ENCODE measurements at regions of chr6 and their contacts with region 1.

Region 1: GRCh38 chr6:32971581-32972352 is 3.4 kb downstream of the BRD2 start:
- DNase-seq: peak; percentile 99
- H3K4me3 ChIP-seq: peak overlapping the region; percentile 92
- H3K4me3 Mint-ChIP-seq: peak overlapping the region; percentile 85
- H3K27ac Mint-ChIP-seq: peak overlapping the region; percentile 100
- H3K4me1 ChIP-seq: peaks cover 27% of the 10 kb centered on the region
- H3K4me1 Mint-ChIP-seq: peaks cover 24% of the 10 kb centered on the region
- H3K27me3 ChIP-seq: no peaks in the 10 kb centered on the region
- H3K27me3 Mint-ChIP-seq: no peaks in the 10 kb centered on the region
- CTCF ChIP-seq: no peak

Region 2: GRCh38 chr6:32838114-32838958 is 133.4 kb before region 1 on chr6 and contains the start of gene TAP2:
- CTCF ChIA-PET with region 1: interaction called, 9 read pairs
- POLR2A ChIA-PET with region 1: interaction called, 13 read pairs
- intact Hi-C with region 1: no loop called
- DNase-seq: peak; percentile 89 to 97
- H3K4me3 ChIP-seq: peak within 1 kb of the TSS; percentile 69
- H3K4me3 Mint-ChIP-seq: peak within 1 kb of the TSS; percentile 72
- H3K27ac Mint-ChIP-seq: no peak within 1 kb of the TSS
- H3K4me1 ChIP-seq: peaks cover 5% of the 10 kb centered on the region
- H3K4me1 Mint-ChIP-seq: peaks cover 8% of the 10 kb centered on the region
- H3K27me3 ChIP-seq: no peaks in the 10 kb centered on the region; the same call in 1 of the 2 replicates
- H3K27me3 Mint-ChIP-seq: no peaks in the 10 kb centered on the region
- CTCF ChIP-seq: peak; percentile 85 to 86
- total RNA-seq, gene TAP2: 10.3 and 11.9 TPM in 2 replicates

Region 3: DNA sequence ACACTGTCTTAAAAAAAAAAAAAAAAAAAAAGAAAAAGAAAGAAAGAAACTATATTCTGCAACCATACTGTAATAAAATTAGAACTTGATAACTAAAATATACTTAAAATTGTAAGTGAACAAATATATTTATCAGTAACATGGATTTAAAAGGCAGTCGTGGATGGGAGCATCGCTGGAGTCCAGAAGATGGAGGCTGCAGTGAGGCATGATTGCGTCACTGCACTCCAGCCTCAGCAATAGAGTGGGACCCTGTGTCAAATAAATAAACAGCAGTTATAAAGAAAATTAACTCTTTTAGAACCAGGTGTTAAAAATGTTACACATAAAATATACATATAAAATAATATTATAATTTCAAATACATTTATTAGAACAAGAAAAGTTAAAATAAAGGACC is 109.0 kb before region 1 on chr6:
- CTCF ChIA-PET with region 1: no interaction called
- POLR2A ChIA-PET with region 1: no interaction called
- intact Hi-C with region 1: no loop called
- DNase-seq: no peak
- H3K4me3 ChIP-seq: no peak overlapping the region
- H3K4me3 Mint-ChIP-seq: no peak overlapping the region
- H3K27ac Mint-ChIP-seq: no peak overlapping the region
- H3K4me1 ChIP-seq: peaks cover 5% of the 10 kb centered on the region
- H3K4me1 Mint-ChIP-seq: no peaks in the 10 kb centered on the region
- H3K27me3 ChIP-seq: no peaks in the 10 kb centered on the region; the same call in 1 of the 2 replicates
- H3K27me3 Mint-ChIP-seq: peaks cover 17% of the 10 kb centered on the region
- CTCF ChIP-seq: no peak

Region 4: DNA sequence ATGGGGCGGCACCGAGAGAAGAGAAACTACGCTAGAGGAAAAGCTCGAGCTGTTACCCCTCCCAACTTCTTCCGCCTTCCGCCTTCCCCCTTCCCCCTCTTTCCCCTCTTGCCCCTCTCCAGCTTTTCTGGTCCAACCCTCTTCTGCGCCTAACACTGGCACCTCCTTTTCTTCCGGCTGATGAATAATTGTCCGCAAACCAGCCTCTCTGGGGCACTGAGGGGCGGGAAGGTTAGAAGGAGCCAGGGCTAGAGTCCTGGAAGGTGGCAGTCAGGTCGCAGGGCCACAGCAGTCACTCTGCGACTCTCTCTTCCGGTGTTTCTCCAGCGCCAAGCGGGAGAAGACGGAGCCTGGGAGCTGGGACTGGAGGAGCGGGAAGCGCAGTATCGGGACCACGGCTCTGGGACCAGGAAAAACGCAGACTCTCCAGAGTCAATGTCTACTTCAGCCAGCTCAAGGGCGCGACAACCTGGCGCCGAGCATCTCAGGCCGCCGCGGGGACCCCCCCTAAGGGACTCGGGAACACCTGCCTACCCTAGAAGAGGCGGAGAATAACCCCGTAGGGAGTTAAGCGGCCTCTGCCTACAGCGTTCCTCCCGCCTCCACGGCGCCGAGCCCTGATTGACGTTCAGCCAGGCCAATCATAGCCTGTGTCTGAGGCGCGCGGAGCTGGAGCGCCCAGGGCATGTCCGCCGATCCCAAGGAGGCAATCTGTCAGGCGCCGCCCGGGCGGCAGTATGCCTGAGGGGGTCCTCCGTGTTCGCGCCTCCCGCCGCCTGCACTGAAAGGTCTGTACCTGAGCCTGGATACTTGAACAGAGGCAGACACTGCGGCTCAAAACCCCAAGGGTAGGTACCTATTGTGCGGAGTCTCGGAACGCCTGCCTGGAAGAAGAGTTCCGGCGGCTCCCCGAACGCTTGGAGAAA is 77.4 kb before region 1 on chr6:
- CTCF ChIA-PET with region 1: interaction called, 5 read pairs
- POLR2A ChIA-PET with region 1: interaction called, 26 read pairs
- intact Hi-C with region 1: loop called (anchors 5 kb)
- DNase-seq: peak; percentile 93 to 96
- H3K4me3 ChIP-seq: peak overlapping the region; percentile 68
- H3K4me3 Mint-ChIP-seq: peak overlapping the region; percentile 99
- H3K27ac Mint-ChIP-seq: peak overlapping the region; percentile 96
- H3K4me1 ChIP-seq: no peaks in the 10 kb centered on the region
- H3K4me1 Mint-ChIP-seq: peaks cover 7% of the 10 kb centered on the region
- H3K27me3 ChIP-seq: no peaks in the 10 kb centered on the region
- H3K27me3 Mint-ChIP-seq: peaks cover 4% of the 10 kb centered on the region
- CTCF ChIP-seq: no peak

Region 5: DNA sequence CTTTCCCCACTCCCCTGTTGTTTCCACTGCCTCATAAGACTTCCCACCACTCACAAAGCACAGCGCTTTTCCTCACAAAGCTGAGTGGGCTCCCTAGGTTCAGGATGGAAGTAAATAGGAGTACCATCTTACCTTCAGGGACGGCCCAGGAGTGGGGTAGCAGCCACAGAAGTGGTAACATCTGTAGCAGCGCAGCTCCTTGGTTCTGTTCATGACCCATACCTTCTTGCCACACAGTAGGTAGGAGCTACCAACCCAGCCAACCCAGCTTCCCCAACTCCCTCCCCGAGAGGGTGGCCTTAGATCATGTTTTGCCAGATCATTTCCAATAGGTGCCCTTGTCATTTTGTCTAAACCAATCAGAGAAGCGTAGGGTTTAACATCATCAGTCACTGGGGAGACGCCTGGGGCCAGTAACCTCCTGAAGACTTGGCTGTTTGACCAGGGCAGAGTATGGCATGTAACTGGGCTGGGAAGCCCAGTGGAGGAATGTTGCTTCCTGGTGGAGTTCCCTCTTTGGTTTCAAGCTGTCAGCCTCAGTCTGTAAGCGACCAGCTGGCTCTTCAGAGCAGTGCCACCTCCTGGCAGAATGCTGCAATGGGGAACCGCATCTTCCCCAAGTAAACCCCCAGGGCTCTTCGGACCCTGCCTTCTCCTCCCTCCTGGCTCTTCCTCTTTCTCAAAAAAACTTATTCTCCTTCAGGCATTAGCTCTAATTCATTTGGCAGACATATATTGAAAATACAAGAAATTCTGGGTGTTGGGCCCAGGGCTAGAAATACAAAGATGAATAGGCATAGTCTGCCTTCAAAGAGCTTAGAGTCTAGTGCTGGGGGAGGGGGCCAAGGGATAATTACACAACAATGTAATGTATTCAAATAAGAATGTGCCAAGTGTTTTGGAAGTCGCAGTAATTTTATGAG is 18.7 kb before region 1 on chr6 and contains the start of gene HLA-DMA:
- CTCF ChIA-PET with region 1: interaction called, 7 read pairs
- POLR2A ChIA-PET with region 1: interaction called, 22 read pairs
- intact Hi-C with region 1: loop called (anchors 1 kb)
- DNase-seq: peak; percentile 77 to 79
- H3K4me3 ChIP-seq: no peak within 1 kb of the TSS
- H3K4me3 Mint-ChIP-seq: no peak within 1 kb of the TSS
- H3K27ac Mint-ChIP-seq: peak within 1 kb of the TSS; percentile 15
- H3K4me1 ChIP-seq: no peaks in the 10 kb centered on the region
- H3K4me1 Mint-ChIP-seq: peaks cover 7% of the 10 kb centered on the region
- H3K27me3 ChIP-seq: no peaks in the 10 kb centered on the region
- H3K27me3 Mint-ChIP-seq: peaks cover 3% of the 10 kb centered on the region
- CTCF ChIP-seq: peak; percentile 50 to 74
- total RNA-seq, gene HLA-DMA: 1.6 and 2.1 TPM in 2 replicates

Region 6: DNA sequence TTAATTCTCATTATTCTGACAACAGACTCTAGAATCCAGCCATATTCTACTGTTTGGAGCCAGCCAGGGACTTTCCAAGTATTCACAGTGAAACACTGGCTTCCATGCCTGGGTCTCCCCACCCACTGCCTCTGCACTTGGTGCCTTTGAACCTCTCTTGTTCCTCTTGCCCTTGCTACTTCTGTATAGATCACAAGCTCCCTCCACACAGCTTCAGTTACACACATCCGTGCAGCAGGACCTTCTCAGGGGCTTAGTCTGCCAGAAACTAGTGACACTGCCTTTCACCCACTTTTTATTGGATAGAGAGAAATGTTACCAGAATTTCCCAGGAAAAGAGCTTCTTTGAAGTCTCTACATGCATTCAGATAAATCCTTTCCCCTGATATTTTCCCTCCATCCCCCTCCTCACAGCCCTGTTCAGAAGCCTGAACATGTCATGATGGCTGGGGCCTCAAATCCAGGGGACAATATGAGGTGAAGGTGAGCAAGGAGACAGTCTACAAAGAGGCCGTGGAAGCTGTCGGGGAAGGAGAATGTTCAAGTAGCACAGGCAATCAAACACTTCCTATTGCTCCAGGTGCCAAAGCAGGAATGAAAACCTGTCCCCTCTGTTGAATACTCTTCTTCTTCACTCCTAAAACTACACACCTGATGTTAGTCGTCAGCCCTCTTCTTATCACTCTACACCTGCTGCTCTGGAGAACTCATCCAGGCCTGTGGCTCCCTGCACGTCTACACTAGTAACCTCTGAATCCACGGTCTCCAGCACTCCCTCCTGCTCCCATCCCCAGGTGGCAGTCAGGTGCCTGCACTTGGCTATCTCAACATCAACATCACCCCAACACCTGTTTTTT is 57.8 kb after region 1 on chr6:
- CTCF ChIA-PET with region 1: no interaction called
- POLR2A ChIA-PET with region 1: no interaction called
- intact Hi-C with region 1: no loop called
- DNase-seq: no peak
- H3K4me3 ChIP-seq: no peak overlapping the region
- H3K4me3 Mint-ChIP-seq: no peak overlapping the region
- H3K27ac Mint-ChIP-seq: no peak overlapping the region
- H3K4me1 ChIP-seq: no peaks in the 10 kb centered on the region
- H3K4me1 Mint-ChIP-seq: no peaks in the 10 kb centered on the region
- H3K27me3 ChIP-seq: no peaks in the 10 kb centered on the region
- H3K27me3 Mint-ChIP-seq: peaks cover 23% of the 10 kb centered on the region
- CTCF ChIP-seq: no peak

Region 7: DNA sequence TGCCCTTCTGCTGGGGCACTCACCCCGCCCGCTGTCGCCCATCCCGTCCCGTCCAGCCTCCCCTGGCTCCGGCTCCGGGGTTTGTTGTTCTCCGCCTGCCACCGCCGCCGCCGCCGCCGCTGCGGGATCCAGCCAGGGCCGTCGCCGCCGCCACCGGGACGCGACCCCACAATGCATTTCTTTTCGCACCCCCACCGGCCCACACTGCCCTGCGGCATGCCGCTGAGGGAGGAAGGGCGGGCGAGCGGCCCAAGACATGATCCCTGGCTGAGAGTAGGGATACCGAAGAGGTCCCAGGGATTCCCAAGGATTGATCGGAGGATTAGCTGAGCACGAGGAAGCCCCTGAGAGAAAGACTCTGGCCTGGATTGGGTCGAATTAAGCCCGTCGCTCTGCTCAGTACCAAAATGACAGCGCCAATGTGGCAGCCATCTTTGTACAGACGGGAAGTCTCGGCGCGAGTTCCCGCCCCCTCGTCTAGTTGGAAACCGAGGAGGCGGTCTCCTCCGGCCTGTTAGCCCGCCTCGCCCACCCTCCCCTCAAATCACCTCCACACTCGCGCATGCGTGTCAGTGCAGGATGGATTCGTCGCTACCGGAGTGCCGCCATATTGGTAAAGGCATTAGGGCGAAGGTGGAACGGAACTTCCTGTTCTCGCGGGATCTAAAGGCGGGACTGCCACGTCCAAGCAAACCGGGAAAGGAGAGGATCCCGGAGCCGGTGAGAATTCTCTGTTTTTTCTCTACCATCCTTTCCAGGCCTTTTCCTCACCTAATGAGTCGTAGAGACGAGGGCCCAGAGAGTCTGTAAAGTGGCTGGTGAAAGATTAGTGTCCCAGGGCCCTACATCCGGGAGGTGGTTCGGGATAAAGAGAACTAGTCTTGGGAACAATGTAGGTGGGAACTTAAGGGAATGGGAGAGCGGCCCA is 228.7 kb after region 1 on chr6 and contains the starts of genes RXRB and SLC39A7:
- CTCF ChIA-PET with region 1: no interaction called
- POLR2A ChIA-PET with region 1: interaction called, 16 read pairs
- intact Hi-C with region 1: loop called (anchors 2 kb)
- DNase-seq: peak; percentile 97 to 99
- H3K4me3 ChIP-seq: peak within 1 kb of the TSS; percentile 67
- H3K4me3 Mint-ChIP-seq: peak within 1 kb of the TSS; percentile 100
- H3K27ac Mint-ChIP-seq: peak within 1 kb of the TSS; percentile 99
- H3K4me1 ChIP-seq: peaks cover 29% of the 10 kb centered on the region
- H3K4me1 Mint-ChIP-seq: peaks cover 43% of the 10 kb centered on the region
- H3K27me3 ChIP-seq: no peaks in the 10 kb centered on the region
- H3K27me3 Mint-ChIP-seq: no peaks in the 10 kb centered on the region
- CTCF ChIP-seq: no peak
- total RNA-seq, gene RXRB: 29.5 and 30.4 TPM in 2 replicates
- total RNA-seq, gene SLC39A7: 140 and 141 TPM in 2 replicates

Region 8: DNA sequence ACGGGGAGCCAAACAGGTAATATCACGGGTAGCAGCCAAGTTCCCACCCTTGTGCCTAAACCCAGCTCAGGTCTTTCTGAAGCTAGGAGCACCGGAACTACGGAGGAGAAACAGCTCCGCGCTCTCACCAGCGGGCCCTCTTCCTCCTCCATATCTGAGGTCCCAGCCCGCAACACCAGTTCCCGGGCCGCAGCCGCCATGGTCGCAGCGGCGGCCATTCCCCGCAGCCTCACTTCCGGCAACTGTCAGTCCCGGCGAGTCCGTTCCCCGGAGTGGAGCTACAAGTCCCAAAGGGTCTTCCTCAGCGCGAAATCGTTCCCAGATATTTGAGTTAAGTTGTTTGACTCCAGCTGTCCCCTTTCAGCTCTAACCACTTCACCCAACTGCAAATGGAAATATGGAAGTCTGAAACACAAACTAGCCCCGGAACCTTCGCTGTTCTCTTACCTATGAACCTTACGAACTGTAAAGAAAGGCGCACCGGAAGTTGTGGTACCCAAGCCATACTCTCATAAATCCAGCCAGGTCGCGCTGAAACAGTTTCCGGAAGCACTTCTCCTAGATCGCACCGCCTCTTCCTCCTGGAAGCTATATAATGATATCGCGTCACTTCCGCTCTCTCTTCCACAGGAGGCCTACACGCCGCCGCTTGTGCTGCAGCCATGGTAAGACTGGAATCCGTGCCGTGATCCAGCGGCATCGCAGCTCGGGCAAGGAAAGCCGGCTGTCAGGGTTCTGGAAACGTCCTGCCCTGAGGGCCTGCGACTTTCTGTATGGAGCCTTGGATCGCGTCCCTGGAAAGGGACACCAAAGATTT is 299.9 kb after region 1 on chr6 and contains the starts of genes RPS18 and VPS52:
- CTCF ChIA-PET with region 1: no interaction called
- POLR2A ChIA-PET with region 1: interaction called, 16 read pairs
- intact Hi-C with region 1: no loop called
- DNase-seq: peak; percentile 93 to 97
- H3K4me3 ChIP-seq: peak within 1 kb of the TSS; percentile 56
- H3K4me3 Mint-ChIP-seq: peak within 1 kb of the TSS; percentile 95
- H3K27ac Mint-ChIP-seq: peak within 1 kb of the TSS; percentile 100
- H3K4me1 ChIP-seq: peaks cover 18% of the 10 kb centered on the region
- H3K4me1 Mint-ChIP-seq: peaks cover 24% of the 10 kb centered on the region
- H3K27me3 ChIP-seq: no peaks in the 10 kb centered on the region
- H3K27me3 Mint-ChIP-seq: no peaks in the 10 kb centered on the region
- CTCF ChIP-seq: no peak
- total RNA-seq, gene RPS18: 2,340 and 2,366 TPM in 2 replicates
- total RNA-seq, gene VPS52: 55.1 and 55.6 TPM in 2 replicates